Cardiac septum (tissue), 1 donor: ENCODE measurements at regions of chr1 and their contacts with region 1.

Region 1: DNA sequence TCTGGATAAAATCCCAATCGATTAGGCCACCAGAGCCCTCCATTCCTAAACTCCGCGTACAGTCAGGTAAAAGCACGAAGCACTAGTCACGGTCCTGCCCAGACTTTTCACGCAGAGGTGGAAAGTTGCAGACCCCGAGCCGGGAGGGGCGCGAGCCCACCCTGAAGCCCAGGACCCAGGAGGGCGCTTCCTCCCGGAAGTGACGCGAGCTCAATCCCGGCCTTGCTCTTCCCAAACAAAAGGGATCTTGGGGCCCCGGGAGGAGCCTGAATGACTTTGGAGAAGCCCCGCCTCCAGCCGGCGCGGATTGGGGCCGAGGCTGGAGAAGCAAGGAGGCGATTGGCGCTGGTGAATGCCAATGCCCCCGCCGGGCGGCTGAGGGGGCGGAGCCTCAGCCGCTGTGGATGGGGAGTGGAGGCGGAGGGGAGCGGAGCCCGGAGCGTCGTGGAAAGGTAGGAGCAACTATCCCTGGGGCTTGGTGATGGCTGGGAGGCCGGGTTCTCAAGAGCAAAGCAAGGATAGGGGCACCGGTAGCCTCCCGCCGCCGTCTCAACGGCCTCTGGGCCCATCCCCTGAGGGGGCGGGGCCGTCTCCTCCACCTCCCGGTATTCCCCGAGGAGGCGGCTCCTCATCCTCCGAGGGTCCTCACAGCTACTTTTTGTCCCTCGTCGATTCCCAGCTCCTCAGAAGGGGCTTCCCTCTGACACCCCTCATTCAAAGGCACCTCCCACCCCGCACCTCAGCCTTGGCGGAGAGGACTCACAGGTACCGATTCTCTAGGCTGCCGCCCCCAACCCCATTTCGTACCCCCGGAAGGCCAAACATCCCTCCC is at the start of gene CTTNBP2NL:
- DNase-seq: peak; percentile 98
- total RNA-seq, gene CTTNBP2NL: 19.1 TPM

Region 2: DNA sequence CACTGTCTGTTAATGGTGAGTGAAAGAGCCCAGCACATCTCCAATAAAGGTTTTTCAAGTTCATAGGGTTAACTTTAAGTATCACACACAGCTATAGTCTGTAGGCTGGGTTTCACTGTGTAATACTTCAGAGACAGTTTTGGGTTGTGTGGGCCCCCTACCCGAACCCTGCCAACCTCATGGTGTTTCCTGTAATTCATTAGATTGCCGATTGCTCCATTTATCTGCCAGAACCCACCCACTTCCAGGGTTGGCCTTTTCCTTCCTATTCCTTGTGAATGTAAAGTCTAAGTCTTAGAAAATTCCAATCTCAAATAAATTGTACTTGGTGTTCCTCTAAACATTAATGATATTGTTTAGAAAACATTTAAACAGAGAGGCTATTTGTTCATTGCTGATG is 43.6 kb after region 1 on chr1:
- intact Hi-C with region 1: loop called (anchors 2 kb)
- DNase-seq: no peak

Region 3: GRCh38 chr1:112466078-112466660 is 70.1 kb after region 1 on chr1:
- intact Hi-C with region 1: loop called (anchors 1 kb)
- DNase-seq: peak; percentile 97

Region 4: GRCh38 chr1:113166473-113166872 is 770.4 kb after region 1 on chr1:
- intact Hi-C with region 1: no loop called
- DNase-seq: no peak